ENCODE measurements at regions of chr9 and their contacts with region 1.

Region 1: GRCh38 chr9:137000177-137000883 is 4.0 kb upstream of the CLIC3 start:
- DNase-seq: no peak
- H3K4me3 ChIP-seq: no peak overlapping the region
- H3K27ac ChIP-seq: peak overlapping the region in 1 of 59 donors; percentile 44
- H3K27me3 ChIP-seq: no peaks in the 10 kb centered on the region
- CTCF ChIP-seq: no peak

Region 2: GRCh38 chr9:136882109-136882946 is 118.0 kb before region 1 on chr9:
- intact Hi-C with region 1: no loop called
- DNase-seq: no peak
- H3K4me3 ChIP-seq: no peak overlapping the region
- H3K27ac ChIP-seq: no peak overlapping the region
- H3K27me3 ChIP-seq: no peaks in the 10 kb centered on the region
- CTCF ChIP-seq: no peak

Region 3: GRCh38 chr9:137034863-137035761 is 34.8 kb after region 1 on chr9:
- intact Hi-C with region 1: loop called in 1 of 2 experiments (anchors 5 kb)
- DNase-seq: peak; percentile 80 to 91 (median 88)
- H3K4me3 ChIP-seq: peak overlapping the region in 40 of 59 donors; percentile 2 to 51 (median 20)
- H3K27ac ChIP-seq: peak overlapping the region in 58 of 59 donors; percentile 10 to 100 (median 82)
- H3K27me3 ChIP-seq: no peaks in the 10 kb centered on the region
- CTCF ChIP-seq: peak; percentile 72 to 99 (median 95)